ENCODE measurements at regions of chr3 and their contacts with region 1.

Region 1: GRCh38 chr3:42780892-42781700 is 8.0 kb upstream of the CCDC13 start:
- DNase-seq: no peak
- ATAC-seq: peak; percentile 42 to 76
- H3K4me3 ChIP-seq: no peak overlapping the region
- H3K27ac ChIP-seq: peak overlapping the region in 3 of 4 donors; percentile 48 to 65 (median 52)
- H3K4me1 ChIP-seq: peaks cover 0 to 17% of the 10 kb centered on the region in 2 donors
- H3K27me3 ChIP-seq: no peaks in the 10 kb centered on the region
- CTCF ChIP-seq: peak; percentile 67 to 88 (median 83)
- POLR2A ChIP-seq: no peak

Region 2: GRCh38 chr3:42430781-42431532 is 350.1 kb before region 1 on chr3:
- in situ Hi-C with region 1: no loop called
- intact Hi-C with region 1: no loop called
- DNase-seq: no peak
- ATAC-seq: no peak
- H3K4me3 ChIP-seq: no peak overlapping the region
- H3K27ac ChIP-seq: no peak overlapping the region
- H3K4me1 ChIP-seq: no peaks in the 10 kb centered on the region
- H3K27me3 ChIP-seq: no peaks in the 10 kb centered on the region
- CTCF ChIP-seq: no peak
- POLR2A ChIP-seq: no peak

Region 3: GRCh38 chr3:42831321-42831713 is 50.2 kb after region 1 on chr3:
- in situ Hi-C with region 1: loop called in 3 of 4 experiments (anchors 5 to 10 kb)
- intact Hi-C with region 1: loop called (anchors 2 kb)
- DNase-seq: peak; percentile 48 to 67
- ATAC-seq: peak; percentile 66 to 82
- H3K4me3 ChIP-seq: no peak overlapping the region
- H3K27ac ChIP-seq: no peak overlapping the region
- H3K4me1 ChIP-seq: no peaks in the 10 kb centered on the region
- H3K27me3 ChIP-seq: no peaks in the 10 kb centered on the region
- CTCF ChIP-seq: peak; percentile 66 to 74 (median 72)
- POLR2A ChIP-seq: no peak

Region 4: DNA sequence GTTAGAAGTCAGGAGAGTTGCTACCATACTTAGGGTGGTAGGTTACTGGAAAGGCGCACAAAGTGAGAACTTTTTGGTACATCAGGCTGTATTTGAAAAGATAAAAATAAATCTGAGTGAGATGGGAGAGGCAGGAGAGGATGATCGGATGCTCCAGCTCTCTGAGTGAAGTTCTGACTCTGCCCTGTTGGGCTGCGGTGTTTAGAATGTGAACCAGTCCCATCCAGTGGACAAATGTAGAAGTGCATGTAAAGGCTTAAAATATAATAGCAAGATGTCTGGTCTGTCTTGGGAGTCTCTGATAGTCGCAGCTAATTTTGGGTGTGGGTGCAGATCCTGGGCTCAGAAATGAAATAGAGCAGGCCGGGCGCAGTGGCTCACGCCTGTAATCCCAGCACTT is 58.5 kb after region 1 on chr3:
- in situ Hi-C with region 1: loop called in 3 of 4 experiments (anchors 5 to 10 kb)
- intact Hi-C with region 1: loop called (anchors 2 kb)
- DNase-seq: peak in 1 of 2 donors; percentile 32
- ATAC-seq: peak; percentile 95 to 96
- H3K4me3 ChIP-seq: no peak overlapping the region
- H3K27ac ChIP-seq: no peak overlapping the region
- H3K4me1 ChIP-seq: no peaks in the 10 kb centered on the region
- H3K27me3 ChIP-seq: no peaks in the 10 kb centered on the region
- CTCF ChIP-seq: peak; percentile 70 to 87 (median 80)
- POLR2A ChIP-seq: no peak

Region 5: DNA sequence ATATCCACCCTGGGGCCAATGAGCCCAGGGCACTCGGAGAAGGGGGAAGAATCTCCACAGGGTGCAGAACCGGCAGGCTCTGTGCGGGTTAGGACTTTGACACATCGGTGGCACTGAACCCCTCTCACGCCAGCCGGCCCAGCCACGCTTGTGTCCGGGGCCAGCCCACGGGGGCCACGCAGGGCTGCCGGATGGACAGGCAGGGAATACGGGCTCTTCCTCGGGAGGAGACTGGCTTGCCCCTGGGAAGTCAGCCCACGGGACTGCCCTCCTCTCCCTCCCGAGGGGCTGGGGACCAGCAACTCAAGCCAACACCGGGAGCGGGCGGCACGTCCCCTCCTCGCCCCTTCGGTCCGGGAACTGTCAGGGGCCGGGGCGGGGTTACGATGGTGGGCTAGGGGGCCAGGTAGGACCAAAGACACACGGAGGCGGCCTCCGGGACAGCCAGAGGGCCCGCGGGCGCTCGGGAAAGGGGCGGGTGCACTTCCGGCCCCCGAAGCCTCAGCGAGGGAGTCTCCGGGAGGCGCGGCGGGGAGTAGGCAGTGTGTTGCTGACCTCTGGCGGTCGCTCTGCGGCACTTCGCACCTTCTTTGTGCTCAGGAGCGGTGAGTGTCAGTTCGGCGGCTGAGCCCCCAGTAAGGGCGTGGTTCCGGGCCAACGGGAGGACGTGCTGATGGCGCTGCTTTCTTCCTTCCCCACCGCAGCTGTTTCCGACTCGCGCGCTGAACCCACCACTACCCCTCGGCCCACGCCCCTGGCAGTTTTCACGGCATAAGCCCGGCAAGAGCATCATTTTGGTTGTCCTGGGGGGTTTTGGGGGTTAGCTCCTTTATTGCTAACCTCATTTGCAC is 99.7 kb after region 1 on chr3:
- in situ Hi-C with region 1: loop called (anchors 5 to 10 kb)
- intact Hi-C with region 1: loop called (anchors 1 kb)
- DNase-seq: peak; percentile 75 to 76
- ATAC-seq: peak; percentile 97 to 99
- H3K4me3 ChIP-seq: peak overlapping the region; percentile 78 to 90 (median 84)
- H3K27ac ChIP-seq: peak overlapping the region; percentile 77 to 82 (median 81)
- H3K4me1 ChIP-seq: peaks cover 4 to 5% of the 10 kb centered on the region in 2 donors
- H3K27me3 ChIP-seq: no peaks in the 10 kb centered on the region
- CTCF ChIP-seq: peak; percentile 89 to 95 (median 92)
- POLR2A ChIP-seq: no peak

Region 6: GRCh38 chr3:42886294-42886822 is 105.3 kb after region 1 on chr3:
- in situ Hi-C with region 1: loop called (anchors 5 to 10 kb)
- intact Hi-C with region 1: loop called (anchors 1 kb)
- DNase-seq: no peak
- ATAC-seq: no peak
- H3K4me3 ChIP-seq: no peak overlapping the region
- H3K27ac ChIP-seq: no peak overlapping the region
- H3K4me1 ChIP-seq: peaks cover 0 to 1% of the 10 kb centered on the region in 2 donors
- H3K27me3 ChIP-seq: no peaks in the 10 kb centered on the region
- CTCF ChIP-seq: no peak
- POLR2A ChIP-seq: no peak

Measured in gastrocnemius medialis (tissue), 4 donors.